ENCODE measurements at regions of chr3 and their contacts with region 1.

Region 1: DNA sequence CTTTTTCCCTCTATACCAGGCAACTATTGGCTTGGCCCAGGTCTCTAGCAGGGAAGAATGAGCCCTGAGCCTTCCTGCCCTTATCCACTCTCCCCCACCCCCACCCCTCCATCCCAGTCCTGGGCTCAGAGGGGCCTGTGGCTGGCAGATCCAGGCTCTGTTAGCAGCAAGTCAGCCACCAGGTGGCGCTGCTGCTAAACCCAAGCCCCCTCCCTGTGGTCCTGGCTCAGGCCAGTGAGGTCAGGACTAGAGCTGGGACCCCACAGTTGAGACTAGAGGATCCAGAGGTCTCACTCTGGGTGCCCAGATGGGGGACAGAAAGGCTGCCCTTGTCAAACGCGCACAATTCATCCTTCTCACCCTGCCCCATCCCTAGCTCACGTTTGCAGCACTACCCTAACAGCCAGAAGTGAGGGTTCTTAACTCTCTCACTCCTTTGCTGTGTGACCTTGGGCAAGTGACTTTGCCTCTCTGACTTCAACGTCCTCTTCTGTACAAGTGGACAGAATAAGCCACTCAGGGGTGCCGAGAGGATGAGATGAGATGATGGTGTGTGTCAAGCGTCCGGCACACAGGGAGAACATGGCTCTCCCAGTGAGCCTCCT is 46.8 kb upstream of the SLC6A1 start:
- DNase-seq: peak; percentile 47 to 86 (median 72)
- H3K4me3 ChIP-seq: no peak overlapping the region
- H3K27ac ChIP-seq: peak overlapping the region in 7 of 59 donors; percentile 3 to 90 (median 39)
- H3K27me3 ChIP-seq: no peaks in the 10 kb centered on the region
- CTCF ChIP-seq: peak; percentile 77 to 99 (median 96)

Region 2: DNA sequence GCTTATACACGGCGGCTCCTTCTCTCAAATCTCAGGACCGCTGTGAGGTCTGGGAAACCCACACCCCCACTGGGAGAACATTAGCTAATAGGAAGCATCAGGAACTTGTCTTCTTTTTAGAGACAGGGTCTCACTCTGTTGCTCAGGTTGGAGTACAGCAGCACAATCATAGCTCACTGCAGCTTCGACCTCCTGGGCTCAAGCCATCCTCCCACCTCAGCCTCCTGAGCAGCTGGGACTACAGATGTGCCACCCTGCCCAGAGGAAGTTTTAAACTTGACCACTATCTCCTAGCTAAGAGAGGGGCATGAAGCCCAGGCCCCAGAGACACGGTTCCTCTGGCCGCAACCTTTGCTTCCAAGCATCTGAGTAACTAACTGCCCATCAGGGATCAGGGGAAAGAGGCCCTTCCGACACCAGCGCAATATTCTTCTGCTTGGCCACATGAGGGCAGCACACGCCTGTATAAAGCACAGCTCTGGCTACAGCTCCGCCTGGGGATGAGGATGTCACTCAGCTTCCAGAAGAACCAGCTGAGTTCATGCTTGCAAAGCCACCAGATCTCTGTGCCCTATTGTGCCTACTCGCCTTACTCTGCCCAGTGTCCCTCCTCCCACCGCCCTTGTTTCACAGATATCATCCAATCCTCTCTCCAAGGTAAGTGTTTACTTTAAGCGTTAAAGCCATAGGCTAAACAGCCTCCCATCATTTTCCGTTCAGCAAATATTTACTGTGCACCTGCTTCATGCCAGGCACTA is 187.3 kb before region 1 on chr3:
- intact Hi-C with region 1: loop called (anchors 2 to 5 kb)
- DNase-seq: peak in 9 of 10 donors; percentile 61 to 83 (median 75)
- H3K4me3 ChIP-seq: no peak overlapping the region
- H3K27ac ChIP-seq: peak overlapping the region in 15 of 59 donors; percentile 3 to 59 (median 41)
- H3K27me3 ChIP-seq: no peaks in the 10 kb centered on the region
- CTCF ChIP-seq: peak; percentile 40 to 96 (median 89)

Region 3: GRCh38 chr3:10816019-10816862 is 129.5 kb before region 1 on chr3 and contains the start of gene SLC6A11:
- intact Hi-C with region 1: no loop called
- DNase-seq: peak in 5 of 10 donors; percentile 15 to 63 (median 48)
- H3K4me3 ChIP-seq: peak within 1 kb of the TSS; percentile 20 to 70 (median 57)
- H3K27ac ChIP-seq: peak within 1 kb of the TSS in 25 of 59 donors; percentile 4 to 77 (median 42)
- H3K27me3 ChIP-seq: peaks cover 0 to 32% (median 5%) of the 10 kb centered on the region in 45 donors
- CTCF ChIP-seq: no peak
- total RNA-seq, gene SLC6A11: 9.3 to 93.6 (median 35.0) TPM

Region 4: GRCh38 chr3:10983219-10983916 is 37.6 kb after region 1 on chr3:
- intact Hi-C with region 1: loop called (anchors 2 to 5 kb)
- DNase-seq: peak in 3 of 10 donors; percentile 46 to 58 (median 52)
- H3K4me3 ChIP-seq: peak overlapping the region in 35 of 59 donors; percentile 7 to 54 (median 28)
- H3K27ac ChIP-seq: peak overlapping the region in 43 of 59 donors; percentile 10 to 86 (median 57)
- H3K27me3 ChIP-seq: no peaks in the 10 kb centered on the region
- CTCF ChIP-seq: peak; percentile 66 to 95 (median 86)

Region 5: GRCh38 chr3:10992017-10992941 is 46.5 kb after region 1 on chr3 and contains the start of gene SLC6A1:
- intact Hi-C with region 1: loop called in 1 of 2 experiments (anchors 2 kb)
- DNase-seq: peak in 9 of 10 donors; percentile 55 to 78 (median 71)
- H3K4me3 ChIP-seq: peak within 1 kb of the TSS; percentile 58 to 91 (median 78)
- H3K27ac ChIP-seq: peak within 1 kb of the TSS; percentile 82 to 98 (median 95)
- H3K27me3 ChIP-seq: peaks cover 0 to 10% (median 0%) of the 10 kb centered on the region in 45 donors
- CTCF ChIP-seq: peak in 51 of 56 donors; percentile 8 to 71 (median 43)
- total RNA-seq, gene SLC6A1: 127 to 356 (median 209) TPM

Region 6: GRCh38 chr3:11021611-11022011 is 75.8 kb after region 1 on chr3:
- intact Hi-C with region 1: loop called (anchors 1 to 5 kb)
- DNase-seq: peak in 9 of 10 donors; percentile 57 to 75 (median 65)
- H3K4me3 ChIP-seq: no peak overlapping the region
- H3K27ac ChIP-seq: peak overlapping the region; percentile 48 to 96 (median 87)
- H3K27me3 ChIP-seq: no peaks in the 10 kb centered on the region
- CTCF ChIP-seq: peak in 55 of 56 donors; percentile 37 to 91 (median 69)

Region 7: GRCh38 chr3:11060500-11061251 is 114.9 kb after region 1 on chr3:
- intact Hi-C with region 1: loop called (anchors 1 kb)
- DNase-seq: peak; percentile 35 to 86 (median 70)
- H3K4me3 ChIP-seq: peak overlapping the region in 57 of 59 donors; percentile 9 to 67 (median 47)
- H3K27ac ChIP-seq: peak overlapping the region in 34 of 59 donors; percentile 3 to 75 (median 40)
- H3K27me3 ChIP-seq: peaks cover 0 to 13% (median 0%) of the 10 kb centered on the region in 45 donors
- CTCF ChIP-seq: peak; percentile 78 to 98 (median 95)

Region 8: GRCh38 chr3:11323813-11324212 is 378.0 kb after region 1 on chr3:
- intact Hi-C with region 1: loop called in 1 of 2 experiments (anchors 5 kb)
- DNase-seq: no peak
- H3K4me3 ChIP-seq: no peak overlapping the region
- H3K27ac ChIP-seq: peak overlapping the region in 35 of 59 donors; percentile 1 to 79 (median 37)
- H3K27me3 ChIP-seq: no peaks in the 10 kb centered on the region
- CTCF ChIP-seq: no peak

Measured in dorsolateral prefrontal cortex (tissue), 120 donors.